ENCODE measurements at regions of chr17 and their contacts with region 1.

Region 1: DNA sequence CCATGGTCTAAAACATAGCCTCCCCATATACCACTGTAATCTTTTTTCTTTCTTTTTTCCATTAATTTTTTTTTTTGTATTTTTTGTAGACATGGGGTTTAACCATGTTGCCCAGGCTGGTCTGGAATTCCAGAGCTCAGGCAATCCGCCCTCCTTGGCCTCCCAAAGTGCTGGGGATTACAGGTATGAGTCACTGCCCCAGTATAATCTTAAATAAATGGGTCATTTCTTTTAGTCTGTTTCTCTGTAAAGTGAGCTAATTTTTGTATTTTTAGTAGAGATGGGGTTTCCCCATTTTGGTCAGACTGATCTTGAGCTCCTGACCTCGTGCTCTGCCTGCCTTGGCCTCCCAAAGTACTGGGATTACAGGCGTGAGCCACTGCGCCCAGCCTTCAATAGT is 5.7 kb upstream of the NME1 start:
- DNase-seq: no peak
- ATAC-seq: no peak

Region 2: GRCh38 chr17:50993544-50993943 is 154.1 kb before region 1 on chr17:
- intact Hi-C with region 1: loop called (anchors 10 kb)
- DNase-seq: no peak
- ATAC-seq: no peak

Measured in sciatic nerve (tissue), 2 donors.